ENCODE measurements at regions of chr16 and their contacts with region 1.

Region 1: GRCh38 chr16:27367461-27368357 is 34.3 kb upstream of the IL21R start:
- DNase-seq: peak; percentile 63
- ATAC-seq: peak; percentile 88
- H3K4me3 ChIP-seq: no peak overlapping the region
- H3K27ac ChIP-seq: no peak overlapping the region; the same call in 1 of the 2 replicates
- H3K4me1 ChIP-seq: peaks cover 13% of the 10 kb centered on the region
- H3K27me3 ChIP-seq: no peaks in the 10 kb centered on the region
- CTCF ChIP-seq: peak; percentile 80
- POLR2A ChIP-seq: no peak
- RAD21 ChIP-seq: peak; percentile 95

Region 2: DNA sequence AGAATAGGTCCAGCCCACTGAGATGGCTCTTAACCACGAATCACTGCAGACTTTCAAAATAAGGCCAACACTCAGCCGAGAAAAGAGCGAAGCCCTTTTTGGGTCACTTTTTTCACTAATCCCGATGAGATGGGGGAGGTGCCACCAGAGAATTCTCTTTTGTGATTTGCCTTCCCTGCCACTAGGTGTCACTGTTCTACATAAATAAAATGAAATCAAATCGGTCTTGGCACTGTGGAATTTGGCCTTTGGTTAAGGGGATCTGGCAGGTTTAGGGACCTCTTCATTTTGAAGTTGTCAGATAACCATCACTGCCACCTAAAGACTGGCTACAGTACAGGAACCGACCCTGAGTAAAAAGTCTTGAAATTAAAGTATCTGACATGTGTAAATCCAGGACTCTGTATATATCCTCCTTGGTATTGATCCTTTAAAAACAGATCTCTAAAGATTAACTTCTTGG is 1529.0 kb before region 1 on chr16:
- CTCF ChIA-PET with region 1: no interaction called
- POLR2A ChIA-PET with region 1: no interaction called
- dilution Hi-C with region 1: no loop called
- in situ Hi-C with region 1: no loop called
- intact Hi-C with region 1: loop called (anchors 2 kb)
- DNase-seq: peak; percentile 41
- ATAC-seq: peak; percentile 68
- H3K4me3 ChIP-seq: no peak overlapping the region
- H3K27ac ChIP-seq: no peak overlapping the region
- H3K4me1 ChIP-seq: no peaks in the 10 kb centered on the region
- H3K27me3 ChIP-seq: no peaks in the 10 kb centered on the region
- CTCF ChIP-seq: peak; percentile 75
- POLR2A ChIP-seq: no peak
- RAD21 ChIP-seq: peak; percentile 58

Region 3: GRCh38 chr16:27109666-27110523 is 257.8 kb before region 1 on chr16:
- CTCF ChIA-PET with region 1: interaction called, 3 read pairs
- POLR2A ChIA-PET with region 1: no interaction called
- dilution Hi-C with region 1: no loop called
- in situ Hi-C with region 1: no loop called
- intact Hi-C with region 1: loop called (anchors 5 kb)
- DNase-seq: peak; percentile 47
- ATAC-seq: peak; percentile 98
- H3K4me3 ChIP-seq: peak overlapping the region; percentile 46
- H3K27ac ChIP-seq: peak overlapping the region; percentile 17; the same call in 1 of the 2 replicates
- H3K4me1 ChIP-seq: no peaks in the 10 kb centered on the region
- H3K27me3 ChIP-seq: no peaks in the 10 kb centered on the region
- CTCF ChIP-seq: peak; percentile 91
- POLR2A ChIP-seq: no peak
- RAD21 ChIP-seq: peak; percentile 92

Region 4: DNA sequence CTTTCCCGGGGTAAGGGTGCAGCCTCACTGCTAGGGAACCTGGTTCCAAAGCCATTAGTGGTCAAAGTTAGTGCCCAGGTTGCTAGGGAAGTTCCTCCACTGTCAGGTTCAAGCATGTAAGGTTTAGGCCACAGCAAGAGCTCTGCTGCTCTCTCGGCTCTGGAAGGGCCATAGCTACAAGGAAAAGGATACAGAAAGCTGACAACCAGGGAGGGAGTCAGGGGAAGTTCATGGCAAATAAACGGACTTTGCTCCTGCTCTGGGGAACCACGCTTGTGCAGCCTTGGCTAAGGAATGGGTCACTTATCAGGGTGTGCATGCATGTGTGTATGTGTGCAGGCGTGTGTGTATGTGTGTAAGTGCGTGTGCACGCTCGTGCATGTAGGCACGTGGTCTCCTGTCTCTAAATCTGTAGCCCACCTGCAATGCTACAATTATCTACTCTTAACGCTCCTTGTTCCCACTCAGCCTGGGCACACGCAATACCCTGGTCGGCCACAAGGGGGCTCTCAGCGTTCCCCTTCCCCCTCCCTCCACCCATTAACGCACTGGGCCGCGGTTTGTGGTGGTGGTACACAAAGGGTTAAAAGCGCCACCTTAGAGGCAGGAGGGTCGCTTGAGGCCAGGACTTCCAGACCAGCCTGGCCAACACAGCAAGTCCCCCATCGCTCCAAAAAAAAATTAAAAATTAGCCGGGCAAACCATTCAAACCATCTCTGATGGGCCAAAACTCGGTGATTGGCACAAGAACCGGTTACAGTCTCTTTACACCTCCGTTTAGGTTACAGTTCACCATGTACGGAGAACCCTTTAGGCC is 212.8 kb before region 1 on chr16:
- CTCF ChIA-PET with region 1: interaction called, 7 read pairs
- POLR2A ChIA-PET with region 1: no interaction called
- dilution Hi-C with region 1: no loop called
- in situ Hi-C with region 1: no loop called
- intact Hi-C with region 1: loop called (anchors 1 kb)
- DNase-seq: peak; percentile 21
- ATAC-seq: peak; percentile 94
- H3K4me3 ChIP-seq: no peak overlapping the region
- H3K27ac ChIP-seq: no peak overlapping the region
- H3K4me1 ChIP-seq: 0 out of 2 replicates have a peak, but pooled peaks cover 1% of the 10 kb centered on the region
- H3K27me3 ChIP-seq: no peaks in the 10 kb centered on the region
- CTCF ChIP-seq: peak; percentile 88
- POLR2A ChIP-seq: no peak
- RAD21 ChIP-seq: peak; percentile 77

Region 5: GRCh38 chr16:27179500-27180072 is 188.1 kb before region 1 on chr16:
- CTCF ChIA-PET with region 1: interaction called, 4 read pairs
- POLR2A ChIA-PET with region 1: no interaction called
- dilution Hi-C with region 1: no loop called
- in situ Hi-C with region 1: no loop called
- intact Hi-C with region 1: loop called (anchors 1 kb)
- DNase-seq: peak; percentile 47
- ATAC-seq: peak; percentile 70
- H3K4me3 ChIP-seq: no peak overlapping the region
- H3K27ac ChIP-seq: no peak overlapping the region
- H3K4me1 ChIP-seq: peaks cover 11% of the 10 kb centered on the region
- H3K27me3 ChIP-seq: no peaks in the 10 kb centered on the region
- CTCF ChIP-seq: peak; percentile 78
- POLR2A ChIP-seq: no peak
- RAD21 ChIP-seq: peak; percentile 65

Region 6: DNA sequence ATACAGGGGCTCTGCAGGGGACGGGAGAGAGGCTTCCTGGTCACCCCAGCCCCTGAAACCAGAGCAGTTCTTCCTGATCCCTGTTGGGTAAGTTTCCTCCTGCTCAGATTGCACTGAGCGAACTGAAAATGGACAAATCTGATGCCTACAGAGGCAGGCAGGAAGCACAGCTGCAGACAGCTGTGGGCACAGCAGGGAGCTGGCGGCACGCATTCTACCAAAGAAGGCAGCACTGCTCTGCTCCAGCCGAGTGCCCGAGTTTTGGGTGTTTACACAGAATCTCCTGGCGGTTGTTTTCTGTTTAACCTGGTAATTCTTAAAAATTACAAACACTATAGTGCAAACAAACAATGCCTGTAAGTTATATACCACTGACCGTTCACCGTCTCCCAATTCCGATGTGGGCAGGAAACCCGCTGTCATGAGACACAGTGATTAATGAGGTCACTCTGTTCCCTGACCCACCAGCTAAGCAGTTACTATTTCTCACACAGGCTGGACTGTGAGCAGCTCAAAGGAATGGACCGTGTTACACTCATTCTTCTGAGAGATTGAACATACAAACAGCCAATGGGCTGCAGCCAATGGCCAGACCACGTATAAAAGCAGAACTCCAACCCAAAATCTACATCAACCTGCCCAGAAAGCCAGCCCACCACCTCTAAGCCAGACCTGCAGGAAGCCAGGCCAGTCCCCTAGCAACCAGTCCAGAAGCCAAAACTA is 124.7 kb before region 1 on chr16:
- CTCF ChIA-PET with region 1: interaction called, 3 read pairs
- POLR2A ChIA-PET with region 1: no interaction called
- dilution Hi-C with region 1: no loop called
- in situ Hi-C with region 1: no loop called
- intact Hi-C with region 1: loop called (anchors 2 kb)
- DNase-seq: peak; percentile 98
- ATAC-seq: peak; percentile 79
- H3K4me3 ChIP-seq: peak overlapping the region; percentile 1; the same call in 1 of the 2 replicates
- H3K27ac ChIP-seq: peak overlapping the region; percentile 94
- H3K4me1 ChIP-seq: peaks cover 37% of the 10 kb centered on the region
- H3K27me3 ChIP-seq: no peaks in the 10 kb centered on the region
- CTCF ChIP-seq: peak; percentile 13; the same call in 1 of the 2 replicates
- POLR2A ChIP-seq: no peak; the same call in 1 of the 2 replicates
- RAD21 ChIP-seq: peak; percentile 18

Region 7: DNA sequence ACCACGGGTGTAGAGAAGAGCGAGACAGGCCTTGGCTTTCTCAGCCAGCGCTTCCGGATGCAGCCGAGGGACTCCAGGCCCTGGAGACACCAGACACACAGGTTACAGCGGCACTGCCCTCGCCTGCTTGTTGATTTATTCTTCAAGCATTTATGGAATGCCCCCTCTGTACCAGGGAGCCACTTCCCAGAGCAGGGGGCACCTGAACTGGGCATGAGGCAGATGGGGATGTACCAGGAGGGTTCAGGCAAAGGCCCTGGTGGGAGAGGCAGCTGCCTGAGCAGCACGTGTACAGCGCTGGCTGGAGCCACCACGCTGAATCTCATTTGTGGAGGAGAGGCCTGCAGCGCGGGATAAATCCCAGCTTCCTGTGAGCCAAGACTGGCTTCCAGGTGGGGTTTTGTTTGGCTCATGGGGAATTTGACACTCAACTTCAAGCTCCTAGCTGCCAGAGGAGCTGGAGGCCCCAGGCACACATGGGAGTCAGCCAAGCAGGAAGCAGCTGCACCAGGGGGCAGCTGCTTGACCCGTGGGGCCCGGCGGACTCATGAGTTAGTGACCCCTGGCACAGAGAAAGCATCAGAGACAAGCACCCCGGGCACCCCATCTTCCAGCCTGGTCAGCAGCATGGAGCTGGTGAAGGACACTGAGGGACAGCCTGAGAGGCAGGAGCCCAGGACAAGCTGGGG is 93.9 kb after region 1 on chr16:
- CTCF ChIA-PET with region 1: no interaction called
- POLR2A ChIA-PET with region 1: no interaction called
- dilution Hi-C with region 1: no loop called
- in situ Hi-C with region 1: no loop called
- intact Hi-C with region 1: loop called (anchors 1 kb)
- DNase-seq: peak; percentile 54
- ATAC-seq: peak; percentile 9; the same call in 1 of the 2 replicates
- H3K4me3 ChIP-seq: no peak overlapping the region
- H3K27ac ChIP-seq: no peak overlapping the region
- H3K4me1 ChIP-seq: peaks cover 4% of the 10 kb centered on the region
- H3K27me3 ChIP-seq: no peaks in the 10 kb centered on the region
- CTCF ChIP-seq: no peak
- POLR2A ChIP-seq: no peak
- RAD21 ChIP-seq: no peak

Measured in IMR-90 (cell line).